Activated CD4-positive, alpha-beta memory T cell treated with anti-CD3 and anti-CD28 coated beads for 36 hours (primary cell): ENCODE measurements at regions of chr7 and their contacts with region 1.

Region 1: GRCh38 chr7:114085592-114086501 is 167.0 kb upstream of the PPP1R3A start:
- DNase-seq: peak; percentile 52
- H3K4me3 Mint-ChIP-seq: peak overlapping the region; percentile 77
- H3K27ac Mint-ChIP-seq: no peak overlapping the region
- H3K4me1 Mint-ChIP-seq: peaks cover 38% of the 10 kb centered on the region
- H3K27me3 Mint-ChIP-seq: peaks cover 59% of the 10 kb centered on the region

Region 2: GRCh38 chr7:114048386-114049240 is 37.2 kb before region 1 on chr7:
- CTCF ChIA-PET with region 1: no interaction called
- POLR2A ChIA-PET with region 1: no interaction called
- intact Hi-C with region 1: loop called (anchors 2 kb)
- DNase-seq: peak; percentile 13
- H3K4me3 Mint-ChIP-seq: peak overlapping the region; percentile 62
- H3K27ac Mint-ChIP-seq: peak overlapping the region; percentile 55
- H3K4me1 Mint-ChIP-seq: peaks cover 12% of the 10 kb centered on the region
- H3K27me3 Mint-ChIP-seq: no peaks in the 10 kb centered on the region

Region 3: GRCh38 chr7:114663502-114663901 is 577.7 kb after region 1 on chr7:
- CTCF ChIA-PET with region 1: no interaction called
- POLR2A ChIA-PET with region 1: no interaction called
- intact Hi-C with region 1: loop called (anchors 1 kb)
- DNase-seq: no peak
- H3K4me3 Mint-ChIP-seq: no peak overlapping the region
- H3K27ac Mint-ChIP-seq: no peak overlapping the region
- H3K4me1 Mint-ChIP-seq: peaks cover 6% of the 10 kb centered on the region
- H3K27me3 Mint-ChIP-seq: no peaks in the 10 kb centered on the region

Region 4: GRCh38 chr7:114922016-114922651 is 836.3 kb after region 1 on chr7 and contains the start of gene MDFIC:
- CTCF ChIA-PET with region 1: no interaction called
- POLR2A ChIA-PET with region 1: no interaction called
- intact Hi-C with region 1: loop called (anchors 10 kb)
- DNase-seq: peak; percentile 84
- H3K4me3 Mint-ChIP-seq: peak within 1 kb of the TSS; percentile 87
- H3K27ac Mint-ChIP-seq: peak within 1 kb of the TSS; percentile 93
- H3K4me1 Mint-ChIP-seq: peaks cover 63% of the 10 kb centered on the region
- H3K27me3 Mint-ChIP-seq: no peaks in the 10 kb centered on the region
- total RNA-seq, gene MDFIC: 78.0 to 82.3 TPM

Region 5: GRCh38 chr7:115851291-115851690 is 1765.4 kb after region 1 on chr7:
- CTCF ChIA-PET with region 1: interaction called, 9 read pairs
- POLR2A ChIA-PET with region 1: no interaction called
- intact Hi-C with region 1: loop called (anchors 1 kb)
- DNase-seq: no peak
- H3K4me3 Mint-ChIP-seq: no peak overlapping the region
- H3K27ac Mint-ChIP-seq: no peak overlapping the region
- H3K4me1 Mint-ChIP-seq: no peaks in the 10 kb centered on the region
- H3K27me3 Mint-ChIP-seq: peaks cover 6% of the 10 kb centered on the region